ENCODE measurements at regions of chr15 and their contacts with region 1.

Region 1: DNA sequence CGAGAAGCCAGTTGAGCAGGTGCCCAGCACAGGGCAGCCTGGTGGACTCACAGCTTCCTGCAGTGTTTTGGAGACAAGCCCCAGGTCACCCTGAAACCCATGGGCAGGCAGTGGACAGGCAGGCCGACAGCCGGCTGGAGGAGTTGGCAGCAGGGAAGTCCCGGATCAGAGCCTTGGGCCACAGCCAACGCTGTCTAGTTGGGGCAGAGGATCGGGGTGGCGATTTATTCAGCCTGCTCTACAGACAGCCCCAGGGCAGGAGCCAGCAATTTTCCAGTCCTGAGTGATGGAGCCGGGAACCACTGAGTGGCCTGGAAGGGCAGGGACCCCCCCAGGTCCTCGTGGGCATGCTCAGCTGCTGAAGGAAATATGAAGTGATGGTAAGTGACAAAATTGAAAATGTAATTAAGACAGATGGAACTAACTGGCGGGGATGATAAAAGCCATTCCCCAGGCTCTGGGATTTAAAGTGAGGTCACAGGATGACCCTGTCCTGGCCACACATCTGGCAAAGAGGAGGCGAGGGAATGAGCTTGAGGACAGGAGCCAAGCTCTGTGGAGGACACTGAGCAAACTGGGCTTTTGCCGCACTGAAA is 34.4 kb upstream of the TBC1D21 start:
- DNase-seq: no peak
- ATAC-seq: no peak
- H3K4me3 ChIP-seq: no peak overlapping the region
- H3K27ac ChIP-seq: no peak overlapping the region
- H3K4me1 ChIP-seq: no peaks in the 10 kb centered on the region
- H3K27me3 ChIP-seq: peaks cover 50% of the 10 kb centered on the region
- CTCF ChIP-seq: no peak

Region 2: DNA sequence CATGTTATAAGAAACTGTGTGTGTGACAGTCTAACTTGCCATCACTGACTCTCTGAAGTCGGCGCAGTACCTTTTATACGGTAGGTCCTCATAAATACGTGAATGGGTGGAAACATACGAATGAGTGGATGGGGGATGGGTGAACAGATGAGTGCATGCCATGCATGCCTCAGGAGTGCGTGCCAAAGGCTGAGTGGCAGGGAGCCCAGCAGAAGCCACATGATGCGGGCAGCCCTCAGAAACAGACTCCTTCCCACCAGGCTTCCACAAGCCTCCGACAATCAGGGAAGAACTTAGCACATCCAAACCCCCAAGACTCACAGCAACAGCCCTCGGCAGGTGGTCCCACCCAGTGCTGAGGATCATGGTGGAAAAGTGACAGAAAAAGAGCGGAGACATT is 486.8 kb before region 1 on chr15:
- CTCF ChIA-PET with region 1: no interaction called
- POLR2A ChIA-PET with region 1: interaction called, 11 read pairs
- in situ Hi-C with region 1: no loop called
- intact Hi-C with region 1: no loop called
- DNase-seq: no peak
- ATAC-seq: no peak
- H3K4me3 ChIP-seq: no peak overlapping the region
- H3K27ac ChIP-seq: no peak overlapping the region
- H3K4me1 ChIP-seq: no peaks in the 10 kb centered on the region
- H3K27me3 ChIP-seq: peaks cover 2% of the 10 kb centered on the region; the same call in 1 of the 2 replicates
- CTCF ChIP-seq: no peak

Region 3: DNA sequence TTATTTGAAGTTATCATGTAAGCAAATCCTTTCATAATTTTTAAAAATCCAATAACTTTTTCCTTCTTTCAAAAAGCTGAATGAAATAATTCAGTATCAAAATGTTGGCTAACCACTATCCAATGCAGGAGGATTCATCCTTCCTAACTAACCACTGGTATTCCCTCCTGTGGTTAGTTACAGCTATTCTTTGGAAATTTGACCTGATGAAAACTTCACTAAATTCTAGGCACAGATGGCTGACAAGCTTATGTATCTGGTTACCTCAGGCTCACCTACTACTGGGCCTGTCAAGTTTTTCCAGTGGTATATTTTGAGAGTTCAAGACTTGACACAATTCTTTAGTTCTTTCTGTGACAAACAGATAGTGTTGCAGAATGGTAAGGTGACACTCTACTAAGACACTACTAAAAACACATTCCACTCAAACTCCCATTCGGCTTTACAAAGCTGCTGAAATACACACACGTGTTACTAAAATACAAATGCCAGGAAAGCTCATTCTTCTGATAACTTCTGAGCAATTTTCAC is 221.6 kb before region 1 on chr15:
- CTCF ChIA-PET with region 1: no interaction called
- POLR2A ChIA-PET with region 1: no interaction called
- in situ Hi-C with region 1: no loop called
- intact Hi-C with region 1: no loop called
- DNase-seq: no peak
- ATAC-seq: no peak
- H3K4me3 ChIP-seq: no peak overlapping the region
- H3K27ac ChIP-seq: no peak overlapping the region
- H3K4me1 ChIP-seq: peaks cover 4% of the 10 kb centered on the region
- H3K27me3 ChIP-seq: no peaks in the 10 kb centered on the region
- CTCF ChIP-seq: no peak

Measured in Panc1 (cell line).